HepG2 (cell line): ENCODE measurements at regions of chr18 and their contacts with region 1.

Region 1: DNA sequence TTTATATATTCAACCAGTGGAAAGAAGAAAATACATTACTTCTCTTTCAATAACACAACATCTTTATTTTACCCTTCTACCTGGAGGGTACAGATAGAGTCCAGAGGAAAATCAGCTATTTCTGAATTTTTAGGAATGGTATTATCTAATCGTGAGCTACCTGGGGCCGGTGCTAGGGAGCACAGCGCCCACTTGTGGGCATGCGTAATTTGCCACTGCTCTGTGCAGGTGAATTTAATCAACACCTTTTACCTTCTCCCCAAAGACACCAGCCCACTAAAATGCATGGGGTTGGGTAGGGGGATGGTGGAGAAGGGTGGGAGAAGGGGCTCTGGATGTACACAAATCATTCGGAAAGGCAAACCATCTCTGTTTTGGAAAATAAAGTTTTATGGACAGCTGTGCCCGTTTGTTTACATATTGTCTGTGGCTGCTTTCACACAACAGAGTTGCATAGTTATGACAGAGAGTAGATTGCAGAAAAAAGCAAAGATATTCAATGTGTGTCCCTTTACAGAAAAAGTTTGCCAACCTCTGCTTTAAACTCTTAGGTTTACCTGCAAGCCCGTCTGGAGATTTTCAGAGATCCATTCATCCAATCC is 51.5 kb upstream of the DCC start:
- DNase-seq: peak; percentile 17
- ATAC-seq: peak; percentile 85
- H3K4me3 ChIP-seq: no peak overlapping the region
- H3K27ac ChIP-seq: no peak overlapping the region
- H3K4me1 ChIP-seq: no peaks in the 10 kb centered on the region
- H3K27me3 ChIP-seq: no peaks in the 10 kb centered on the region
- CTCF ChIP-seq: peak; percentile 82
- EP300 ChIP-seq: no peak
- POLR2A ChIP-seq: no peak
- RAD21 ChIP-seq: peak; percentile 64

Region 2: DNA sequence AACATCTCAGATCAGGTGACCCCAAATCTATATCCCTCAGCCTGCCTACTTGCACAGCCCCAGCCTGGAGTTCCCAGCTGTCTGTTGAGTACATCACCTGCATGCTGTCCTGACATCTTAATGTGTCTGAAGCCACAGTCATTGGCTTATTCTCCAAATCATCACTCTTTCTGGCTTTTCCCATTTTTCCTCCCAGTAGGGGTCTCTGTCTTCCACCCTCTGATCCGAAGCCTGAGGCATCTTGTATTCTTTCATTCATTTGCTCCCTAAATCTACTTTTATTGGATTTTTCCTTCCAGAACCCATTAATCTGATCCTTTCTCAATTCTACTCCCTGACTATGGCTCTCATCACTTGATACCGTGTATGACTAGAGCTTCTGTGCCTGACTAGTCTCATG is 281.4 kb before region 1 on chr18:
- CTCF ChIA-PET with region 1: interaction called, 4 read pairs
- POLR2A ChIA-PET with region 1: no interaction called
- in situ Hi-C with region 1: no loop called
- intact Hi-C with region 1: loop called (anchors 1 kb)
- DNase-seq: no peak
- ATAC-seq: no peak
- H3K4me3 ChIP-seq: no peak overlapping the region
- H3K27ac ChIP-seq: no peak overlapping the region
- H3K4me1 ChIP-seq: no peaks in the 10 kb centered on the region
- H3K27me3 ChIP-seq: no peaks in the 10 kb centered on the region
- CTCF ChIP-seq: peak; percentile 33
- EP300 ChIP-seq: no peak
- POLR2A ChIP-seq: no peak
- RAD21 ChIP-seq: no peak

Region 3: GRCh38 chr18:52319424-52319983 is 31.0 kb after region 1 on chr18:
- CTCF ChIA-PET with region 1: no interaction called
- POLR2A ChIA-PET with region 1: no interaction called
- in situ Hi-C with region 1: no loop called
- intact Hi-C with region 1: no loop called
- DNase-seq: no peak
- ATAC-seq: no peak
- H3K4me3 ChIP-seq: no peak overlapping the region
- H3K27ac ChIP-seq: no peak overlapping the region
- H3K4me1 ChIP-seq: no peaks in the 10 kb centered on the region
- H3K27me3 ChIP-seq: no peaks in the 10 kb centered on the region
- CTCF ChIP-seq: no peak
- EP300 ChIP-seq: no peak
- POLR2A ChIP-seq: no peak
- RAD21 ChIP-seq: no peak

Region 4: GRCh38 chr18:52903857-52904256 is 615.4 kb after region 1 on chr18:
- CTCF ChIA-PET with region 1: no interaction called
- POLR2A ChIA-PET with region 1: no interaction called
- in situ Hi-C with region 1: no loop called
- intact Hi-C with region 1: loop called (anchors 5 kb)
- DNase-seq: peak; percentile 11
- ATAC-seq: peak; percentile 55
- H3K4me3 ChIP-seq: no peak overlapping the region
- H3K27ac ChIP-seq: no peak overlapping the region
- H3K4me1 ChIP-seq: no peaks in the 10 kb centered on the region
- H3K27me3 ChIP-seq: no peaks in the 10 kb centered on the region
- CTCF ChIP-seq: peak; percentile 38; the same call in 1 of the 2 replicates
- EP300 ChIP-seq: no peak
- POLR2A ChIP-seq: no peak
- RAD21 ChIP-seq: no peak